Posterior cingulate gyrus (tissue), 11 donors: ENCODE measurements at regions of chr16 and their contacts with region 1.

Region 1: GRCh38 chr16:85610508-85611332 is 2.4 kb upstream of the GSE1 start:
- DNase-seq: peak; percentile 74 to 98 (median 85)

Region 2: DNA sequence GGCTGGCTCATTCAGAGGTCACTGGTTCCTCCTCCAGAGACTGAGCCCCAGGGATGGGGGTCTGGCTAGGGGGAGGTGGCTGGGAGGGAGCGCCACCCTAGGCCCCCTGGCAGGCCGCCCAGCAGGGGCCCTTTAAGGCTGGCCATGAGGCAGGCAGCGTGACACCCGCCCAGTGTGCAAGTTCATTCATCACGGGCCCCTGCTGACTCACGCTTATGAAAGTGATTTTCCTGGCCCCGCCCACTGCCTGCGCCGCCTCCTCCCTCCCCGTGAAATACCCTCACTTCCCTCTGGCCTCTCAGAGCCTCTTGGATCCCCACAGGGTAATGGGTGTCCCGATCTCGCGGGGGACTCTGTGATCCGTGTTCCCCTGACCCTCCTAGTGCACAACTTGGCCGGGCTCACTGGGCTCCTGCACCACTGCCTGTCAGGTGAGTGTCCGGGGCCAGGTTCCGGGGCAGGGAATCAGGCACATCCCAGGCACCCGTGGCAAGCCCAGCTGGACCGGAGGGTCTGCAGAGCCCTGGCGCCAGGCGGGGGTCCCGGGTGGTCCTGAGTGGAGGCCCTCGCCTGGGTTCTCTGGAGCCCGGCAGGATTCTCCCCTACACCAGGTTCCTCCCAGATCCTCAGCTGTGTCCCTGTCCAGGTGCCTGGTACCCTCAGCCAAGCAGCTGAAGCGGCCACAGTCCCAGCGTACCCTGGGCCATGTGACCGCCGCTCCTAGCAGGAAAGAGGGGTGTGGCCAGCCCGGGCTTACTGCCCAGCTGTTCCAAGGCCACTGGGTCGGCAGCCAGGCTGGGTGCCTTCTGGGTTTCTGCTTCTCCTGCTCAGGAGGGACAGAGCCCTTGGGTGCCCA is 1657.6 kb before region 1 on chr16 and contains the start of gene OSGIN1:
- intact Hi-C with region 1: no loop called
- DNase-seq: peak; percentile 67 to 97 (median 80)

Region 3: GRCh38 chr16:85275533-85276249 is 335.0 kb before region 1 on chr16:
- intact Hi-C with region 1: loop called (anchors 5 kb)
- DNase-seq: peak; percentile 73 to 97 (median 86)

Region 4: DNA sequence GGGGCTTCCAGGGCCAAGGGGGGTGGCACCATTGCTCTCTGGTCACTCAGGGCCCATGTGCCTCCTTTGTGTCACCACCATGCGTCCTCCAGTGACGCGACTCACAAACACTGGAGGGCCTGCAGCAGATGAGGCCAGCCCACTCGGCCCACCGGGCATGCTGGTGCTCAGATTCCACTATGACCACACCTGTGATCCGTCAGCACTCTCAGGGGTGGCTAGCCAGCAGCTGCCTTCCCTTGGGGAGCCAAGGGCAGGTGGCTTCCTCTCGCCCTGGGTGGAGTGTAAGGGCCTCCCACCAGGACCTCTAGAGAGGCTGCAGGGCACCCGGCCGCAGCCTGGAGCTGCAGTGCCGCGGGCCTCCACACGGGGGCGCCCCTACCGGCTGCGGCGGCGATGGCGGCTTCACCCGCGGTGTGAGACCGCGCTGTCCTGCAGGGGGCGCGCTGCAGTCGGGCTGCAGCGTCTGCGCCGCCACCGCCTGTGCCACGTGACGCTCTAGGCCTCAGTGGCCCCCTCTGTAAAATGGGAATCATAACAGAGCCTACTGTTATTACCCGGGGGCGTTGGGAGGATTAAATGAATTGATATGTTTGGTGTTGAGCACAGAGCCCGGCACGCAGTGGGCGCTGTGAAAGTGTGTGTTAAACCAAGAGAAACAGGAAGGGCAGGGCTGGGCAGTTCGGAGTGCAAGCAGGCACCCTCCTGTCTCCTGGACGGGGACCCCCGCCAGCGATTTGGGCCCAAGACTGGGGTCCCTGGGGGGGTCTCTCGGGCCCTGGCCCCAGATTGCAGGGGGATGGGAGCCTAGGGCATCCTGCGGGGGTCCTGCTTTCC is 190.0 kb before region 1 on chr16:
- intact Hi-C with region 1: loop called (anchors 2 kb)
- DNase-seq: peak in 5 of 10 donors; percentile 22 to 89 (median 62)

Region 5: DNA sequence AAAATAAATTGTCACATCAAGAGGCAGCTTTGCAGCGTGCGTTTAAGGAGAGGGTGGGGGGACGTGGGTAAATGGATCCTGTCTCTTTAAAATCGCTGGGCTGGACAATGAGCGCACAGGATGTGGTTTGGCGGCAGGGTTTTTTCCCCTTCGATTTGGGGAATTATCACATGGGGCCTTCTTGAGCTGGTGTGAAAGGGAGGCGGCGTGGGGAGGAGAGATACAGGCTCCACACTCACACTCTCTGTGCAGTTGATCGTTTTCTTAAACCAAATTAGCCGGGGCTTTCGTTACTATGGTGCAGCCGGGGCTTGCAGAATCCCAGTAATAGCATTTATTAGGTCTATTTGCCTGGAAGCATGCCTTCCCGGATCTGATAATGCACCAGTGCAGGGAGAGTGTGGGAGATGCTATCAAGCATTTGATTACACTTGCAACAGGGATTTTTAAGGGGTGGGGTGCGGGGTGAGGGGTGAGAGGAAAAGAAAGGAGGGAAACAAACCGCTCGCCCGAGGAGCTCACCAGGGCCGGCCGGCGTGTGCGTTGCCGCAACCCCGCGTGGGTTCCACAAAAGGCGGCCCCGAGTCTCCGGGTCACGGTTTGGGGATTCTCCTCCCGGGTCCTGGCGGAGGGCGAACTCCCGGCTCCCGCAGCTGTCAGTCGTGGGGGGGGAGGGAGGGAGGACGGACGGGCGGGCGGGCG is 56.5 kb before region 1 on chr16:
- intact Hi-C with region 1: loop called (anchors 2 kb)
- DNase-seq: peak in 8 of 10 donors; percentile 37 to 91 (median 59)